Dendritic cell treated with granulocyte-macrophage colony-stimulating factor and Interleukin-4, amounts not matched to agents 40 ng/mL and 50 ng/mL, for 4 days (primary cell): ENCODE measurements at regions of chr5 and their contacts with region 1.

Region 1: GRCh38 chr5:73066466-73066865 is 53.9 kb upstream of the TMEM171 start:
- H3K4me3 Mint-ChIP-seq: no peak overlapping the region
- H3K27ac Mint-ChIP-seq: no peak overlapping the region
- H3K4me1 Mint-ChIP-seq: no peaks in the 10 kb centered on the region
- H3K27me3 Mint-ChIP-seq: no peaks in the 10 kb centered on the region

Region 2: GRCh38 chr5:72920690-72921502 is 145.6 kb before region 1 on chr5:
- intact Hi-C with region 1: loop called (anchors 10 kb)
- H3K4me3 Mint-ChIP-seq: no peak overlapping the region
- H3K27ac Mint-ChIP-seq: peak overlapping the region; percentile 53
- H3K4me1 Mint-ChIP-seq: peaks cover 13% of the 10 kb centered on the region
- H3K27me3 Mint-ChIP-seq: peaks cover 3% of the 10 kb centered on the region

Region 3: GRCh38 chr5:73007051-73007450 is 59.4 kb before region 1 on chr5:
- intact Hi-C with region 1: loop called (anchors 10 kb)
- H3K4me3 Mint-ChIP-seq: no peak overlapping the region
- H3K27ac Mint-ChIP-seq: no peak overlapping the region
- H3K4me1 Mint-ChIP-seq: peaks cover 15% of the 10 kb centered on the region
- H3K27me3 Mint-ChIP-seq: no peaks in the 10 kb centered on the region